Left ventricle myocardium inferior (tissue), 1 donor: ENCODE measurements at regions of chr6 and their contacts with region 1.

Region 1: GRCh38 chr6:10951675-10952282 is 64.9 kb downstream of the SYCP2L start:
- DNase-seq: no peak
- H3K4me3 ChIP-seq: no peak overlapping the region
- H3K27ac ChIP-seq: no peak overlapping the region
- H3K4me1 ChIP-seq: no peaks in the 10 kb centered on the region
- H3K27me3 ChIP-seq: no peaks in the 10 kb centered on the region
- CTCF ChIP-seq: peak; percentile 67

Region 2: DNA sequence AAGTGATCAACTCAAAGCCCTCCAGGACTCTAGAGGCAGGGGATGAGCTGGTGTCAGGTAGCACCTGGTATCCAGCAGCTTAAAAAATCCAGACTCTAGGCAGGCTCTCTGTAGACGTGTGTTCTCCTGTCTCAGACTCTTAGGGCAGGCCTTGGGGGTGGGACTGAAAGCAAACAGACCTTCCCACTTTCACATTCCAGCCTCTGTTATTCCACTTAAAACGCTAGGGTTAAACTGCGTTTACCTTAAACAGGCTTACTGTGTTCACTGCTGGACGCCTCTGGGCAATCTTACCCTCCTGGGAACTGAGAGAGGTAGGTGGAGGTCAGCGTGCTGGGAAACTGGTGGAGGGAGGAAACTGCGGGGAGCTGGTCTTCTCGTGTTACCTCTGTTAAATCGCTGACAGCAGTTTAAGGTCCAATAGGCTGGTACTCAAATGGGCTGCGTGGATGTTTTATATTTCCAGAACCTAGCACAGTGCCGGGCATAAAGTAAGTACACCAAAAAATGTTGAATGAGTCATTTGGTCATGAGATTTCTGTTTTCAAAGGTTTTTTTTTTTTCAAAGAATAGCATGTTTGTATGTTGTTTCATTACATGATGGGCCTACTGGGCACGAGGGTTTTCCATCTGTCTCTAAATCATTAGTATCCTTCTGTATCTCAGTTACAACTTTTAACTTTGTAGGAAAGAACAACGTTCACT is 430.5 kb before region 1 on chr6 and contains the start of gene GCNT2:
- intact Hi-C with region 1: no loop called
- DNase-seq: no peak
- H3K4me3 ChIP-seq: peak within 1 kb of the TSS; percentile 61
- H3K27ac ChIP-seq: peak within 1 kb of the TSS; percentile 80
- H3K4me1 ChIP-seq: peaks cover 26% of the 10 kb centered on the region
- H3K27me3 ChIP-seq: no peaks in the 10 kb centered on the region
- CTCF ChIP-seq: no peak
- total RNA-seq, gene GCNT2: 49.0 TPM

Region 3: GRCh38 chr6:10862361-10862760 is 89.4 kb before region 1 on chr6:
- intact Hi-C with region 1: no loop called
- DNase-seq: no peak
- H3K4me3 ChIP-seq: no peak overlapping the region
- H3K27ac ChIP-seq: no peak overlapping the region
- H3K4me1 ChIP-seq: no peaks in the 10 kb centered on the region
- H3K27me3 ChIP-seq: no peaks in the 10 kb centered on the region
- CTCF ChIP-seq: no peak

Region 4: DNA sequence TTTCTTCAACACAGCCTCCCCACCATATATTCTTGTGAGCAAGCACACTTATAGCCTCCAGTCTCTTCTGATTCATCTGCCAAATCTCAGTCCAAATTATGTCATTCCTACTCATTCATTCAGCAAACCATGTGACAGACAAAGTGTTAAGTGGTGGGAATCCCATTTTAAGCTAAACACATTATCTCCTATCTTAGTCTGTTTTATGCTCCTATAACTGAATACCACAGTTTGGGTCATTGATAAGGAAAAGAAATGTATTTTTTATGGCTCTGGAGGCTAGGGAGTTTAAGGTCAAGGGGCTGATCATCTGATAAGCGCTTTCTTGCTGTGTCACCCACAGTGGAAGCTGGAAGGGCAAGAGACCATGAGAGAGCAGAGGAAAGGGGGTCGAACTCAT is 118.0 kb after region 1 on chr6:
- intact Hi-C with region 1: loop called (anchors 2 kb)
- DNase-seq: no peak
- H3K4me3 ChIP-seq: no peak overlapping the region
- H3K27ac ChIP-seq: no peak overlapping the region
- H3K4me1 ChIP-seq: no peaks in the 10 kb centered on the region
- H3K27me3 ChIP-seq: peaks cover 3% of the 10 kb centered on the region
- CTCF ChIP-seq: no peak